WTC11 (cell line): ENCODE measurements at regions of chr17 and their contacts with region 1.

Region 1: DNA sequence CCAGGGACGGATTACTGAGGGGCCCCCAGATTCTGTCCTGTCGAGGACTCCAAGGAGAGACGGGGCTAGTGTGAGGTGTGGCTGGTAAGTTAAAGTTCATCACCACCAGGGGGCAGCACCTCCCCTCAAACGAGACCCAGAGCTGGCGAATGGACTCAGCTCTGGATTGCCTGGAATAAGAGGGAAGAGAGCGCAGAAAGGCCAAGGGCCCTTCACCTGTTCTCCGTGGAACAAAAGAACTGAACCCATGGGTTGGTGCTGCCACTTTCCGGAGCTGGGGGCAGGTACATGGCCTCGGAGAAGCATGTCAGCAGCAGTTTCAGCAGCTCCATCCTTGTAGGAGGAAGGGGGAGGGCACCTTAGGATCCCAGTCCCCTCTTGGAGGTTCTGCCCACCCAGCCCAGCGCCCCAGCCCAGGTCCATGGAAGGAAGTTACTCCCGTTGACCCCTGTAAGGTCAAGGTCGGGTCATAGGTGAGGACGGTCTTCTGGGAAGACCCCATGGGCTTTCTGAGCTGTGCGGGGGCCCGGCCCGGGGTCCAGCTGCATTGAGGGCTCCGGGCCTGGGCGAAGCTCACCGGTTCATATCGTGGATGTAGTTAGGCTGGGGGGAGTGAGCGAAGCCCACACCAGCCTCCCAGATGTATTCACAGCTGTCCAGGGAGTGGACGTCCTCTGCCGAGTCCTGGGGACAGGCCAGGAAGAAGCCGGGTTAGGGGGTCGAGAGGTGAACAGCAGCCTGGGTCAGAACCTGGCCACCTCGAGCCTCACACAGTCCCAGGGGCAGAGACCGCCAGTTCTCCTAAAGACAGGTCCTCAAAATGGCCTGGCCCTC is 10.7 kb downstream of the HID1 start:
- DNase-seq: peak; percentile 94
- ATAC-seq: peak; percentile 81
- H3K4me3 Mint-ChIP-seq: no peak overlapping the region
- H3K27ac Mint-ChIP-seq: no peak overlapping the region
- H3K4me1 Mint-ChIP-seq: peaks cover 8% of the 10 kb centered on the region
- H3K27me3 Mint-ChIP-seq: peaks cover 16% of the 10 kb centered on the region
- CTCF ChIP-seq: peak; percentile 88

Region 2: GRCh38 chr17:74768069-74768762 is 193.7 kb before region 1 on chr17:
- CTCF ChIA-PET with region 1: no interaction called
- POLR2A ChIA-PET with region 1: no interaction called
- DNase-seq: no peak
- ATAC-seq: no peak
- H3K4me3 Mint-ChIP-seq: no peak overlapping the region
- H3K27ac Mint-ChIP-seq: peak overlapping the region; percentile 89
- H3K4me1 Mint-ChIP-seq: peaks cover 5% of the 10 kb centered on the region
- H3K27me3 Mint-ChIP-seq: no peaks in the 10 kb centered on the region
- CTCF ChIP-seq: no peak

Region 3: DNA sequence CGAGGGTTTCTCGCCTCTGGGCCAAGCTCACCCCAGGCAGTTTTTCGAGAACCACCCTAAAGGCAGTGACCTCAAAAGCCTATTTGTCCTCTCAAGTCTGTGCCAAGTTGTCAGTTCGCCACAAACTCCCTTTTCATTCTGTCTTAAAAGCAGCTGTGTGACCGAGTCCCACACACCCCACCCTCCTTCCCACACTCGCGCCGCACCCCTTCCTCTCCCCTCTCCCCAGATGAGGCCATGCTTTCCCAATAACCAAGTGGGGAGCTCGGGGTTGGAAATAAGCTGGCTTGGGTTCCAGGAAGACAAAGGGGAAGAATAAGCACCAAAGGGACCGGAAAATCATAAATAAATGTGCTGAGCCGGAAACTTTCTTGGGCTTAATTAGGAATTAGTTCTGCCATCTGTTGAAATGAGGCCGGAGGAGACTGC is 138.9 kb before region 1 on chr17:
- CTCF ChIA-PET with region 1: no interaction called
- POLR2A ChIA-PET with region 1: no interaction called
- DNase-seq: no peak
- ATAC-seq: no peak
- H3K4me3 Mint-ChIP-seq: no peak overlapping the region
- H3K27ac Mint-ChIP-seq: no peak overlapping the region
- H3K4me1 Mint-ChIP-seq: no peaks in the 10 kb centered on the region
- H3K27me3 Mint-ChIP-seq: peaks cover 1% of the 10 kb centered on the region; the same call in 1 of the 2 replicates
- CTCF ChIP-seq: no peak

Region 4: DNA sequence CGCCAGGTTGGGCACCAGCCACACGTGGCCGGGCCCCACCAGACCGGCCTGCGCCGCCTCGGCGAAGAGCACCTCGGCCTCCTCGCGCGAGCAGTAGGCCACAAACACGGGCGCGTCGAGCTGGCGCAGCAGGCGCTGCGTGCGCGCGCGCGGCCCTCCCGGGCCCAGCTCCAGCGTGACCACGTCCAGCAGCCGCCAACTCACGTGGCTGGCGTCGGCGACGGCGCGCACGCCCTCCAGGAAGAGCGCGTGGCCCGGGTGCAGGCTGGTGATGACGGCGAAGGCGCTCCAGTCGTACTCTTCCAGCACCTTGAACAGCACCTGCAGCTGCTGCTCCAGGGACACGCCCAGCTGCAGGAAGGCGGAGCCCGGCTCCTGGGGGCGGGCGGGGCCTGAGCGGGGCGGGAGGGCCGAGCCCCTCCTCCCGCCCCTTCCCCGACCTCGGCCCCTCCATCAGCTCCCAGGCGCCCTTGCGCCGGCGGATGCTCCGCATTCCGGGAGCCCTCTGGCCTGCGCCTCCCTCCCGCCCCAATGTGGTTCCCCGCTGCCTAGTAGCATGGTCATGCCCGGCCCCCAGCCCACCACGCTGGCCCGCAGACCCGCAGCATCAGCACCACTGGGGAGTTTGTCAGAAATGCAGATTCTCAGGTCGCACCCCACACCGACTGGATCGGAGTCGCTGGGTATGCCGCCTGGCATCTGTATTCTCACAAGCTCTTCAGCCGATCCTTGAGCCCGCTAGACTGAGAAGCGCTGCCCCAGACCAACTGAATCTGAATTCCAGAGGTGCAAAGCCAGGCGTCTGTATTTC is 109.4 kb before region 1 on chr17:
- CTCF ChIA-PET with region 1: interaction called, 12 read pairs
- POLR2A ChIA-PET with region 1: no interaction called
- DNase-seq: peak; percentile 89
- ATAC-seq: peak; percentile 90
- H3K4me3 Mint-ChIP-seq: peak overlapping the region; percentile 79
- H3K27ac Mint-ChIP-seq: no peak overlapping the region
- H3K4me1 Mint-ChIP-seq: peaks cover 9% of the 10 kb centered on the region
- H3K27me3 Mint-ChIP-seq: peaks cover 91% of the 10 kb centered on the region
- CTCF ChIP-seq: no peak

Region 5: DNA sequence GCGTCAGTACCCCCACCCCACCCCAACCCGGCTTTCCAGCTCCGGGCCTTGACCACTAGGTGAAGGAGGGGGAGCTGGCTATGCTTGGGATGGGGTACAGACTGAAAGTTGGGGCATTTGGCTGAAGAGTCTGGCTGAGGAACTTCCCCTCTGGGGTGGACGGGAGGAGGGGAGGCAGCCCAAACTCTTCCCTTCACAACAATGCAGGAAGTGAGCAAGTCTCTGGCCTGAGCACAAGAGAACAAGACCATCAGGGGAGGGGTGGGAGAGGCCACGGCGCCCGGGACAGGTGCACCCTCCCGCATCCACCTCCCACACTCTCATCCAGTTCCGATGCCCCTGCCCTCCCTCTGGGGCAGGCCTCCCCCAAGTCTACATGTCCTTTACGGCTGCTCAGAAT is 44.4 kb before region 1 on chr17:
- CTCF ChIA-PET with region 1: interaction called, 206 read pairs
- POLR2A ChIA-PET with region 1: no interaction called
- DNase-seq: peak; percentile 10
- ATAC-seq: no peak
- H3K4me3 Mint-ChIP-seq: no peak overlapping the region
- H3K27ac Mint-ChIP-seq: no peak overlapping the region
- H3K4me1 Mint-ChIP-seq: peaks cover 9% of the 10 kb centered on the region
- H3K27me3 Mint-ChIP-seq: peaks cover 29% of the 10 kb centered on the region
- CTCF ChIP-seq: no peak

Region 6: GRCh38 chr17:74972107-74972972 is 10.5 kb after region 1 on chr17 and contains the start of gene HID1:
- CTCF ChIA-PET with region 1: interaction called, 133 read pairs
- POLR2A ChIA-PET with region 1: interaction called, 3 read pairs
- DNase-seq: peak; percentile 89
- ATAC-seq: peak; percentile 83
- H3K4me3 Mint-ChIP-seq: peak within 1 kb of the TSS; percentile 90
- H3K27ac Mint-ChIP-seq: no peak within 1 kb of the TSS
- H3K4me1 Mint-ChIP-seq: peaks cover 12% of the 10 kb centered on the region
- H3K27me3 Mint-ChIP-seq: peaks cover 55% of the 10 kb centered on the region
- CTCF ChIP-seq: no peak
- total RNA-seq, gene HID1: 16.7 to 19.4 TPM (median 19.3 TPM) in 3 replicates

Region 7: GRCh38 chr17:75012346-75013091 is 50.6 kb after region 1 on chr17 and contains the start of gene MRPL58:
- CTCF ChIA-PET with region 1: interaction called, 139 read pairs
- POLR2A ChIA-PET with region 1: interaction called, 18 read pairs
- DNase-seq: peak; percentile 94
- ATAC-seq: peak; percentile 81
- H3K4me3 Mint-ChIP-seq: peak within 1 kb of the TSS; percentile 73
- H3K27ac Mint-ChIP-seq: peak within 1 kb of the TSS; percentile 99
- H3K4me1 Mint-ChIP-seq: peaks cover 26% of the 10 kb centered on the region
- H3K27me3 Mint-ChIP-seq: no peaks in the 10 kb centered on the region
- CTCF ChIP-seq: no peak
- total RNA-seq, gene MRPL58: 41.8 to 43.7 TPM (median 41.9 TPM) in 3 replicates

Region 8: GRCh38 chr17:75046582-75047289 is 84.9 kb after region 1 on chr17 and contains the starts of genes ATP5PD and KCTD2:
- CTCF ChIA-PET with region 1: interaction called, 13 read pairs
- POLR2A ChIA-PET with region 1: no interaction called
- DNase-seq: peak; percentile 97
- ATAC-seq: peak; percentile 95
- H3K4me3 Mint-ChIP-seq: peak within 1 kb of the TSS; percentile 99
- H3K27ac Mint-ChIP-seq: peak within 1 kb of the TSS; percentile 96
- H3K4me1 Mint-ChIP-seq: peaks cover 44% of the 10 kb centered on the region
- H3K27me3 Mint-ChIP-seq: no peaks in the 10 kb centered on the region
- CTCF ChIP-seq: no peak
- total RNA-seq, gene ATP5PD: 383 to 427 TPM (median 419 TPM) in 3 replicates
- total RNA-seq, gene KCTD2: 31.3 to 34.0 TPM (median 32.8 TPM) in 3 replicates

Region 9: DNA sequence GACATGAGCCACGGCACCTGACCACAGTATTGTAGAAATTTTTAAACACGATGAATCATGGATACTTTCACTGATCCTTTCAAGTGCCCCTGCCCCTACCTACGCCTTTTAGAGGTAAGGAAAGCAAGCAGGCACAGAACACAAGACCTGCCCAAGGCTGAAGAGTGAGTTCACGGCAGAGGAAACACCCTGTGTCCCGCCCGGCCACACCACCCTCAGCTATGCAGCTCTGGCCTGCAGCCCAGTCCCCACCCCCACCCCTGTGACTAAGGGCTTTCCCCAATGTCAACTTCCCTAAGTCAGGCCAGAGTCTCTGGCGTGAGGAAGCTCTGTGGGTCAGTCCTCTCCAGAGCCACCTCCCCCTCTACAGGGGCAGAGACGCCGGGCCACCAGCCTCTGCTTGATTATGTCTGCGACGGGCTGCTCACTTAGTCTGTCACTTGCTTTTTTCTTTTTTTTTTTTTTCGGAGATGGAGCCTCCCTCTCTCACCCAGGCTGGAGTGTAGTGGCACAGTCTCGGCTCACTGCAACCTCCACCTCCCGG is 134.3 kb after region 1 on chr17:
- CTCF ChIA-PET with region 1: no interaction called
- POLR2A ChIA-PET with region 1: no interaction called
- DNase-seq: no peak
- ATAC-seq: peak; percentile 19
- H3K4me3 Mint-ChIP-seq: no peak overlapping the region
- H3K27ac Mint-ChIP-seq: peak overlapping the region; percentile 84
- H3K4me1 Mint-ChIP-seq: peaks cover 21% of the 10 kb centered on the region
- H3K27me3 Mint-ChIP-seq: no peaks in the 10 kb centered on the region
- CTCF ChIP-seq: no peak

Region 10: GRCh38 chr17:75131280-75132017 is 169.6 kb after region 1 on chr17 and contains the start of gene NT5C:
- CTCF ChIA-PET with region 1: interaction called, 18 read pairs
- POLR2A ChIA-PET with region 1: no interaction called
- DNase-seq: peak; percentile 87
- ATAC-seq: peak; percentile 75
- H3K4me3 Mint-ChIP-seq: peak within 1 kb of the TSS; percentile 84
- H3K27ac Mint-ChIP-seq: peak within 1 kb of the TSS; percentile 93
- H3K4me1 Mint-ChIP-seq: peaks cover 20% of the 10 kb centered on the region
- H3K27me3 Mint-ChIP-seq: no peaks in the 10 kb centered on the region
- CTCF ChIP-seq: peak; percentile 59
- total RNA-seq, gene NT5C: 91.0 to 102 TPM (median 96.9 TPM) in 3 replicates